ENCODE measurements at regions of chr1 and their contacts with region 1.

Region 1: DNA sequence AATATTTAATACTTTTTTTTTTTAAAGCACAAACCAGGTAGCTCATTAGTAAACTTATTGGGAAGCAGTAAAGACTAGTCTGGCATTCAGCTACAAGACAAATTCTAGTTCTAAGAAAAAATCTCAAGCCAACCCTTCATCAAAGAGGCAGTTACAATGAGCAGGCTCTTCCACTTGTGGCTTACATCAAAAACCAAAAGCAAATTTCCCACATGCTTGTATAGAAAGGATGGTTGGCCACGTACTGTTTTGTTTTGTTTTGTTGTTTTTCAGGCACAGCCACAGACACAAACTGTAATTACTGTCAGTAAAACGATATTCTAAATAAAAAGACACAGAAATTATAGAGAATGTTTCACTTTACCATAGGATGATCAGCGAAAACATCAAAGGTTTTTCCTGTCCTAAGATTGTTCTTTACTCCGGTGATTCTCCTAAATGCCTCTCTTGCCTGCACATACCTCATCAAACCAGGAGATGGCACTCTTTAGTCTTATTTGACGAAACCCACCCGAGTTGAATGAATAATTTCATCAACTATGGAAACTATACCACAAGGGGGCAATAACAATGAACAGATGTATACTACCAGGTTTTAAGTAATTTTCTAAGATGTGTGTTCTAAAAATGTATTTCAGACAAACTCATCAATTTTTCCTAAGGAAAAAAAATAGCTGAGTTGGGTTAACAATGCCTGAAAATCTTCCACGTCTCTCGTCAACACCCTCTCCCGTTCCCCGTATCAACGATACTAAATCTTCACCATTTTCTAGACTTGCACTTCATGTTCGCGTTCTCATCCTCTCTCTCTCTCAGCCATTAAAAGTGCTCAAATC is 26.9 kb downstream of the RPL5 start:
- DNase-seq: no peak
- H3K4me3 ChIP-seq: peak overlapping the region in 2 of 4 donors; percentile 7 to 33
- H3K27ac ChIP-seq: no peak overlapping the region
- H3K4me1 ChIP-seq: peaks cover 0 to 8% (median 3%) of the 10 kb centered on the region in 3 donors
- H3K27me3 ChIP-seq: no peaks in the 10 kb centered on the region
- CTCF ChIP-seq: peak; percentile 82 to 98 (median 96)
- POLR2A ChIP-seq: no peak

Region 2: GRCh38 chr1:92960395-92961130 is 101.8 kb after region 1 on chr1:
- intact Hi-C with region 1: loop called (anchors 10 kb)
- DNase-seq: no peak
- H3K4me3 ChIP-seq: peak overlapping the region; percentile 72 to 96 (median 88)
- H3K27ac ChIP-seq: peak overlapping the region; percentile 93 to 98 (median 95)
- H3K4me1 ChIP-seq: peaks cover 0 to 59% (median 5%) of the 10 kb centered on the region in 3 donors
- H3K27me3 ChIP-seq: no peaks in the 10 kb centered on the region
- CTCF ChIP-seq: peak; percentile 53 to 76 (median 62)
- POLR2A ChIP-seq: peak in 1 of 4 donors; percentile 44

Region 3: DNA sequence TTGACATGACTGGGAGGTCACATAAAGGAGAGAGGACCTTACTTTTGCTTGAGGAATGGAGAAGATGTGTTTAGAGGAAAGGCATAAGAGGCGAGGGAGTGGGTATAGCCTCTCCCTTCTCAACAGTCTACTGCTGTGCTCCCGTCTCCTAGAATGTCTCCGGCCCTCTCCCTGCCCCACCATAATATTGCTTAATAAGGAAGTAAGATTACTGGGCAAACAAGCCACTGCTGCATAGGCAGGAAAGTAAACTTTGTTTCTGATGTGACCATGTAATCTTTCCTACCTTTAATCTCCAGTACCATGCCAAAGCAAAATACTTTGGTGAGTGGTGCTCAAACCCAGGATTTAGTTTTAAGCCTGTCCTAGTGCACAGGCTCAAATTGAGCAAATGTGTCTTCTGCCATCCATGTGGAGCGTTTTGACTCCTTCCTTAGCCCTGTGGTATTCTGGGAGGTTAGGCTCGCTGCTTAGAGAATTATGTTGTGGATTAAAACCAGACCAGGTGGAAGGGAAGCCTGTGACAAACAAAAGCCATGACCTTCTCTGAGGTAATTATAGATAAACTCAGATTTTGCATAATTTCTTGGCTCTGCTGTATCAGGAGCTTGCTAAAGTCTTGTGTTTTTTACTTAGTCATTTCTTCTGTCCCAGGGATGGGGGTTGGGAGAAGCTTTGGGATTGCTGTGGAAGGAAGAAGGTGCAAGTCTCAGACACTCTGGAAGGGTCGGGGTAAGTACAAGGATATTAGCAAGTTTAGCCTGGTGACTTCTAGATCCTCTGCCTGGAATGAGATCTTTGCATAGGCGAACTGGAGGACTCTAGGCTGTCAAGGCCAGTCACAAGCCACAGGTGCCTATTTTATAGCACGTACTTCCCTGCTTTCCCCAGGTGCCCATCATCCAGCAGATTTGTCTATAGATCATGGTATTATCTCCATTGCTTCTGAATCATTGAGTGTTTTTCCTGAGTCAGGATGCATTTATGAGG is 137.0 kb after region 1 on chr1:
- intact Hi-C with region 1: loop called (anchors 2 kb)
- DNase-seq: no peak
- H3K4me3 ChIP-seq: no peak overlapping the region
- H3K27ac ChIP-seq: no peak overlapping the region
- H3K4me1 ChIP-seq: peaks cover 4 to 10% (median 8%) of the 10 kb centered on the region in 3 donors
- H3K27me3 ChIP-seq: no peaks in the 10 kb centered on the region
- CTCF ChIP-seq: no peak
- POLR2A ChIP-seq: no peak